Transverse colon (tissue), 4 donors: ENCODE measurements at regions of chr7 and their contacts with region 1.

Region 1: GRCh38 chr7:45153233-45153632 is 4.4 kb upstream of the RAMP3 start:
- DNase-seq: no peak
- H3K4me3 ChIP-seq: no peak overlapping the region
- H3K27ac ChIP-seq: no peak overlapping the region
- H3K4me1 ChIP-seq: peaks cover 0 to 8% (median 5%) of the 10 kb centered on the region in 4 donors
- H3K27me3 ChIP-seq: peaks cover 15% of the 10 kb centered on the region
- CTCF ChIP-seq: peak in 1 of 5 experiments; percentile 13
- EP300 ChIP-seq: no peak
- POLR2A ChIP-seq: no peak

Region 2: GRCh38 chr7:44959433-44959951 is 193.7 kb before region 1 on chr7:
- in situ Hi-C with region 1: no loop called
- intact Hi-C with region 1: no loop called
- DNase-seq: no peak
- H3K4me3 ChIP-seq: no peak overlapping the region
- H3K27ac ChIP-seq: no peak overlapping the region
- H3K4me1 ChIP-seq: peaks cover 0 to 13% (median 11%) of the 10 kb centered on the region in 4 donors
- H3K27me3 ChIP-seq: peaks cover 17% of the 10 kb centered on the region
- CTCF ChIP-seq: no peak
- EP300 ChIP-seq: no peak
- POLR2A ChIP-seq: no peak

Region 3: DNA sequence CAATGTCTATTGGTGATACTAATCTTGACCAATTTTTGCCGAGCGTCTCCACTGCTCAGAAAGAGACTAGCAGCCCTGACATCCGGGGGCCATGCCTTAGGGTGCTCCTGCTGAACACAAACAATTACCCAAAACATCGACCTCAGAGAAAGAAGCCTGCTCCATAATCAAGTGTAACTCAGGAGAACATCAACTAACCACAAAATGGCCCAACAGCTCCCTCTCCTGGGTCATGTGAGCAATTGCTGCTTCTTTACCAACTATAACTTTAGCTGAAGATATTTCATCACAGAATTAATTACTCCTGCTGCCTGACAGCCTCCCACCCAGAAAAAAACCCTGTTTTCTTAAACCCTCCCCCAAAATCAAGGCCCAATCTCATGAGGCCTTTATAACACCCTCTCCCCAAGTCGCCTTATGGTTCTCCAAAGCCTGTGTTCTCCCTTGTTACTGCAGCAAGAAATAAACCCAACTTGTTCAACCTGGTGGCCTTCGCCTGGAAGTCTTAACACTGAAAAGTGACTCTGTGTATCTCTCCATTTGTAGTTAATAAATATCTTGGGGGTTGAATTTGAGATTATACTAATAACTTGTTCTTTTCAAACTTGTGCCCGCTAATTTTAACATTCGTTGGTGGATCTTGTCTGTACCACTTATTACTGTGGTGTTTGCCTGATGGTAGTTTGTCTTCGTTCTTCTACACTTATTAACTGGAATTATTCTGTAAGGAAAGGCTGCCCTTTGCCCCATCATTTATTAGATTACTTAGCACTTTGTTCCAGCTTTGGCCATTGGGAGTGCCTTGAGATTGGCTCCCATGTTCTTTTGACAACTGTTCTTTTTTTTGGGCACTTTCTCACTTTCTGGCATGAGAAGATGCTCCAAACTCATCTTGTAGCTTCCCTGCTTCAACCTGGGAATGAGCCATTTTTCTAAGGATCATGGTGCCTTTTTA is 16.9 kb before region 1 on chr7:
- in situ Hi-C with region 1: no loop called
- intact Hi-C with region 1: no loop called
- DNase-seq: peak; percentile 62
- H3K4me3 ChIP-seq: no peak overlapping the region
- H3K27ac ChIP-seq: no peak overlapping the region
- H3K4me1 ChIP-seq: peaks cover 0 to 9% (median 2%) of the 10 kb centered on the region in 4 donors
- H3K27me3 ChIP-seq: no peaks in the 10 kb centered on the region
- CTCF ChIP-seq: peak; percentile 76 to 84 (median 80)
- EP300 ChIP-seq: no peak
- POLR2A ChIP-seq: no peak

Region 4: DNA sequence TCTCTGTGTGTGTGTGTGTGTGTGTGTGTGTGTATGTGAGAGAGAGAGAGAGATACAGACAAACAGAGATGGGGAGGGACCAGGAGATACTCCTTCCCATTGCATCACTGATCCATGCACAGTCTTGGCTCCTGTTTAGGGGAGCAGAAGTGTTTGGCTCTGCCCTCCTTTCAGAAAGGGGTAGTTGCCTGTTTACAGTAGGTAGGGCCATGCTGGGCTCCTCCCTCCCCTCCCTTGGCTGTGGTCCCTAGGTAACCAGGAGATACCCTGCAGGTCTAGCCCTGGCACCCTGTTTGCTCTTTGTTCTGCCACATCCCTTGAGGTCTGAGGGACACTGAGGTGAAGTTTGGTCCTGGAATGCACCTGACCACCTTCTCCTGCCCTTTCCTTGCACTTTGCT is 99.6 kb after region 1 on chr7:
- in situ Hi-C with region 1: loop called (anchors 5 to 10 kb)
- intact Hi-C with region 1: no loop called
- DNase-seq: no peak
- H3K4me3 ChIP-seq: no peak overlapping the region
- H3K27ac ChIP-seq: no peak overlapping the region
- H3K4me1 ChIP-seq: no peaks in the 10 kb centered on the region
- H3K27me3 ChIP-seq: peaks cover 5% of the 10 kb centered on the region
- CTCF ChIP-seq: no peak
- EP300 ChIP-seq: no peak
- POLR2A ChIP-seq: no peak

Region 5: DNA sequence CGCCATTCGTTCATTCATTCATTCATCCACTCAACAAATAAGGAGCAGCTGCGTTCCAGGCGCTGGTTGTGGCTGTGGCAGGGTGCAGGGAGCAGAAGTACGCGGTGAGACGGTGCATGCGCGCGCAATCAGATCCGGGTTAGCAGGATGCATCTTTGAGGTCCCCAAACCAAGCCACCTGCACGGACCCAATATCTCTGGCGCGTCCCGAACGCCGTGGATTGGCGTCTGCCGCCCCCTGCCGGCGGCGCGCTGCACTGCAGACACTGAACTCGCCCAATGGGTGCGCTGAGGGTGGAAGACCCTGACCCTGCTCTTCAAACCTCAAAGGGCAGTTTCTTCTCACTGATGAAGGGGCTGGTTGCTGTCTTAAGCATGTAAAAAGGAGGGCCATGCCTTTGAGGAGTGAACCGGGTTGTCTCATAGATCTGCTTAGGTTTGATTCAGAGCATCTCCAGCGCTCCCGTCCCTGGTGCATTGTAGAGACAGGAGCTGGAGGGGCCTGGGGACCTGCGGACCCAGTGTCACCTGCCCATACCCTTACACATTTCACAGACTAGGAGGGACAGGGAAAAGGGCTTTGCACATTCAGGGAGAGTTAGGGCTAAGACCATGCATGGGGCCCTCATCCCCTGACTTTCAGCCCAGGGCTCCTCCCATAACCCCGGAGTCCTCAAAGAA is 106.9 kb after region 1 on chr7:
- in situ Hi-C with region 1: loop called in 2 of 4 experiments (anchors 10 kb)
- intact Hi-C with region 1: loop called (anchors 2 kb)
- DNase-seq: peak; percentile 50
- H3K4me3 ChIP-seq: no peak overlapping the region
- H3K27ac ChIP-seq: no peak overlapping the region
- H3K4me1 ChIP-seq: no peaks in the 10 kb centered on the region
- H3K27me3 ChIP-seq: peaks cover 11% of the 10 kb centered on the region
- CTCF ChIP-seq: peak; percentile 89 to 99 (median 98)
- EP300 ChIP-seq: no peak
- POLR2A ChIP-seq: no peak